ENCODE measurements at regions of chr14 and their contacts with region 1.

Region 1: DNA sequence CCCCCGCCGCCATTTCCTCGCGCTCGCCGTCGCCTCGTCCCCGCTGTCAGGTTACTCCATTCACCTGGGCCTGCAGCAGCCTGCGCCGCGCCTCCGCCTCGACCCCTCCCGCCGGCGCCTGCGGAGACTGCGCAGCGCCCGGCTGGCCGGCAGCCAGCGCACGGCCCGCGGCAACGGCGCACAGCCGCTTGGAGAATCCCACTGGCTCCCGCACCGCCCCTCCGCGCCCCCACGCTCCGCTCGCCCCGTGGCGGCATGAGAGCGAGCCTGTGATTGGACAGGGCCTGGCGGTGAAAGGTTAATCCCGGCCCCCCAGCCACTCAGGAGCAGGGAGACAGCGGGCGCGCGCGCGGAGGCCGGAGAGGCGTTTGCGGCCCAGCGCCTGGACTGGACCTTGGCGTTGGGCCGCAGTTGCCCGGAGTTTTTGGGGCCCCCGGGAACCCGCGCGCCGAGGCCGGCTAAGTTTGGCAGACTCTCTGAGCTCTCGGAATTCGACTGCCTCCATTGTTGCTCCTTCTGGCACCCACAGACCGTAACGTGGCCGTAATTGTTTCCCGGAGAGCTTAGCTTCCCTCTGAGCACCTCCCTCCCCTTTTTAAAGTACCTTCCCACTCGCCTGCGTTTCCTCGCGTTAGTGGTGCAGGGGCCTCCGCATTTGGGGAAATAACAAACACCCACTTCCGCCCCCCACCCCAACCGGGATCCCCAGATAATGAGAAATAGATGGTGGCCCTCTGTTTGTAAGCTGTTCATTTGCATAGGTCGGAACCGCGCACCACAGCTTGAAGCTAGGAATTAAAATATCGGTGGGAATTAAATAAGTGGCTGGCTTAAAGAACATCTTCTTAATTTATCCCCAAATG is at the start of gene DICER1:
- DNase-seq: peak; percentile 96
- ATAC-seq: peak; percentile 83 to 87
- H3K4me3 ChIP-seq: peak within 1 kb of the TSS; percentile 74 to 80 (median 77)
- H3K27ac ChIP-seq: peak within 1 kb of the TSS; percentile 90 to 95 (median 92)
- H3K4me1 ChIP-seq: peaks cover 24 to 39% of the 10 kb centered on the region in 2 donors
- H3K27me3 ChIP-seq: no peaks in the 10 kb centered on the region
- CTCF ChIP-seq: peak in 2 of 5 experiments; percentile 7 to 21
- POLR2A ChIP-seq: peak; percentile 75 to 77
- total RNA-seq, gene DICER1: 29.4 to 63.7 (median 37.9) TPM

Region 2: DNA sequence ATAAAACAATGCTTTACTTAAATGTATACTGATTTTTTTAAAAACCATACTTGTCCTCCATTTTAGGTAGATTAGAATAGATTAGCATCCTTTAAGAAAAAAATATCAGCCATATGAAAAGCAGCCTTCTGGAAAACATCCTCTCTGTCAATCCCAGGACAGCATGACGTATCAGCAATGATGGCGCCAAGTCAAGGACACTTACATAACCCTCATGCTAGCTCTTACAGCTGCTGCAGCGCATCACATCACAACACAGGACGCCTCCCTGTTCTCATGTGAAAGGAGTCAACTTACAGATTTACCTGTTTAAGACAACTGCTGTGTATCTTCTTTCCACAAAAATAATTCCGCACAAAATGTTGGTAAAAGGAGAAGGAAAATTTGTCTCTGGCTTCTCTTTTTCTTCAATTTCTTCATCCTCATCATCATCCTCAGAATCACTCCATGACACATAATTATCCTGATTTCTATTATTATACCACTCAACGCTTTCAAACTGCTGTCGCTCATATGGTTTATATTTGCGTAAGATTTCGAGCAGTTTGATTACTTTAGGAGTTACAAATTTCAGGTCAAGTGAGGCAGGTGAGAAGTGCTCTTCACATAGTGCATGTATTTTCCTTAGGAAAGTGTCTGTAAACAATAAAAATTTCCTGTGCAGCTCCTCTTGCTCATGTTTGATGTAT is 33.5 kb before region 1 on chr14:
- in situ Hi-C with region 1: no loop called
- intact Hi-C with region 1: loop called (anchors 1 kb)
- DNase-seq: peak; percentile 85 to 92
- ATAC-seq: peak; percentile 100
- H3K4me3 ChIP-seq: no peak overlapping the region
- H3K27ac ChIP-seq: peak overlapping the region; percentile 73 to 88 (median 83)
- H3K4me1 ChIP-seq: peaks cover 33 to 35% of the 10 kb centered on the region in 2 donors
- H3K27me3 ChIP-seq: no peaks in the 10 kb centered on the region
- CTCF ChIP-seq: no peak
- POLR2A ChIP-seq: peak in 1 of 2 donors; percentile 15

Region 3: GRCh38 chr14:95174184-95174792 is 16.7 kb after region 1 on chr14:
- in situ Hi-C with region 1: no loop called
- intact Hi-C with region 1: no loop called
- DNase-seq: no peak
- ATAC-seq: no peak
- H3K4me3 ChIP-seq: no peak overlapping the region
- H3K27ac ChIP-seq: no peak overlapping the region
- H3K4me1 ChIP-seq: no peaks in the 10 kb centered on the region
- H3K27me3 ChIP-seq: no peaks in the 10 kb centered on the region
- CTCF ChIP-seq: peak in 2 of 5 experiments; percentile 12 to 30
- POLR2A ChIP-seq: no peak

Region 4: GRCh38 chr14:95248432-95248831 is 90.9 kb after region 1 on chr14:
- in situ Hi-C with region 1: no loop called
- intact Hi-C with region 1: no loop called
- DNase-seq: no peak
- ATAC-seq: no peak
- H3K4me3 ChIP-seq: no peak overlapping the region
- H3K27ac ChIP-seq: no peak overlapping the region
- H3K4me1 ChIP-seq: no peaks in the 10 kb centered on the region
- H3K27me3 ChIP-seq: no peaks in the 10 kb centered on the region
- CTCF ChIP-seq: no peak
- POLR2A ChIP-seq: no peak

Region 5: GRCh38 chr14:95258754-95259593 is 101.4 kb after region 1 on chr14:
- in situ Hi-C with region 1: no loop called
- intact Hi-C with region 1: no loop called
- DNase-seq: no peak
- ATAC-seq: no peak
- H3K4me3 ChIP-seq: no peak overlapping the region
- H3K27ac ChIP-seq: peak overlapping the region in 3 of 4 donors; percentile 25 to 43 (median 38)
- H3K4me1 ChIP-seq: peaks cover 14 to 22% of the 10 kb centered on the region in 2 donors
- H3K27me3 ChIP-seq: no peaks in the 10 kb centered on the region
- CTCF ChIP-seq: no peak
- POLR2A ChIP-seq: no peak